Left lung (tissue), 14 donors: ENCODE measurements at regions of chr19 and their contacts with region 1.

Region 1: GRCh38 chr19:5891938-5892771 is 11.4 kb downstream of the NDUFA11 start:
- DNase-seq: peak in 2 of 4 donors; percentile 46 to 80
- ATAC-seq: peak; percentile 86
- H3K4me3 ChIP-seq: no peak overlapping the region
- H3K27ac ChIP-seq: no peak overlapping the region
- H3K4me1 ChIP-seq: peaks cover 0 to 5% of the 10 kb centered on the region in 2 donors
- H3K27me3 ChIP-seq: peaks cover 0 to 48% of the 10 kb centered on the region in 2 donors
- CTCF ChIP-seq: peak; percentile 64 to 66

Region 2: DNA sequence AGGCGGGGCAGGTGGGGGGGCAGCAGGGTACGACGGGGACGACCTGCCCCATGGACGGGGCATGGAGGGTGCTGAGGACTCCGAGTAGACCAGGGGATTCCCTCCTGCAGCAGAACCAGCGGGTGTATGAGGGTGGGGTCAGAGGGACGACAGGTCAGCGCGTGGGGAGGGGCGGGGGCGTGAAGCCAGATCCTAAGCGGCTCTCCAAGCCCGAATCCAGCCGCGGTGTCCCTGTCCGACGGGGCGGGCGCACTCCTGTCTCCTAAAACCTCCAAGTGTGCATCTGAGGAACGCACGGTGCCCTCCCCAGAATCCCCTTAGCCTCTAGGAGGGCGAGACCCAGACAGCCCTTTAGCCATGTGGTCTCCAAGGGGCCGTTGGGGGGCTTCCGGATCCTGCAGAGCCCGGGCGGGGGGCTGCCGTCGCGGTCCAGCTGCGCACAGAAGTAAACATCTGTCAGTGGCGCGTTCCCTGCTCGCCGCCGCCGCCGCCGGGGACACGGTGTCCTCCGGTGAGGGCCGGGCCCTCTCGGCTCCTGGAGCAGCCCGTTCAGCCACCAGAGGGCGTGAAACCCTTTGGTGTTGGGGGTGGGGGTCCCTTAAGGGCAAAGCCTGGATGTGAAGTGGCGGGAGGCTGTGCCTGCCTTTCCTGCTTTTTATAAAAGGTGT is 86.6 kb before region 1 on chr19:
- intact Hi-C with region 1: loop called in 1 of 2 experiments (anchors 5 kb)
- DNase-seq: peak in 2 of 4 donors; percentile 74 to 88
- ATAC-seq: peak; percentile 58
- H3K4me3 ChIP-seq: peak overlapping the region; percentile 15 to 28
- H3K27ac ChIP-seq: no peak overlapping the region
- H3K4me1 ChIP-seq: peaks cover 10 to 28% of the 10 kb centered on the region in 2 donors
- H3K27me3 ChIP-seq: peaks cover 13 to 63% of the 10 kb centered on the region in 2 donors
- CTCF ChIP-seq: peak; percentile 62 to 64

Region 3: DNA sequence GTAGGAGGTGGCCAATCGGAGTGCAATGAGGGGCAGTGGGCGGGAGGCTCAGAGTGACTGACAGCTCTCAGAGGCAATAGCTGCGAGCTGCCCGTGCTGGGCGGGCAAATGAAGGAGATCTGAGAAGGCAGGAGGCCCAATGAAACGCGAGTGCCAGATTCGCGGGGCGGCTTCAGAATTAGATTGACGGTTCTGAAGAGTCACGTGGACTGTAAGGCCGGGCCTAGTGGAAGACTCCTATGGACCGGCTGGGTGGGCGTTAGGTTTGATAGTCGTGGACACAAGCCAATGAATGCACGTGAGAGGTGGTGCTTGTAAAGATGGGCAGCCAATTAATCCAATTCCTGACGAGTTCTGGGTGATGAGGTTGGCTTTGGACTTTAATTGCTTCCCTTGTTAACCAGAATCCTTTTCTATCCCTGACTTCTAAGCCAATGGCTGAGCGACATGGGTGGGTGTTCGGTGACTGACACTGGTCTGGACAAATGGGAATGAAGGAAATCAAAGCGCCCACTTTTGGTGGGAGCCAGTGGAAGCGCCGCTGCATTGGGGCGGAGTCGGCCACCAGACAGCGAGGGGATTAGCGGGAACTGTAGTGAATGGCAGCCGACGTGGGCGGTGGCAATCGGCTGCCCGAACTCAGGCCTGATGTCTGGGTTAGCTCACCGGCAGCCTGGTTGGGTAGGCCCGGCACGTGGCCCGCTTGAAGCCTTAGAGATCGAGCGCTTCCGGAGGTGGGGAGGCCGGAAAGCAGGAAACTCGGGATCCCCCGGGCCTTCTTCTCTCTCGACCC is 533.0 kb after region 1 on chr19:
- intact Hi-C with region 1: no loop called
- DNase-seq: peak; percentile 94 to 100 (median 100)
- ATAC-seq: peak; percentile 93
- H3K4me3 ChIP-seq: peak overlapping the region in 1 of 2 donors; percentile 89
- H3K27ac ChIP-seq: peak overlapping the region; percentile 87
- H3K4me1 ChIP-seq: peaks cover 10 to 32% of the 10 kb centered on the region in 2 donors
- H3K27me3 ChIP-seq: no peaks in the 10 kb centered on the region
- CTCF ChIP-seq: no peak